HepG2 (cell line): ENCODE measurements at regions of chr16 and their contacts with region 1.

Region 1: DNA sequence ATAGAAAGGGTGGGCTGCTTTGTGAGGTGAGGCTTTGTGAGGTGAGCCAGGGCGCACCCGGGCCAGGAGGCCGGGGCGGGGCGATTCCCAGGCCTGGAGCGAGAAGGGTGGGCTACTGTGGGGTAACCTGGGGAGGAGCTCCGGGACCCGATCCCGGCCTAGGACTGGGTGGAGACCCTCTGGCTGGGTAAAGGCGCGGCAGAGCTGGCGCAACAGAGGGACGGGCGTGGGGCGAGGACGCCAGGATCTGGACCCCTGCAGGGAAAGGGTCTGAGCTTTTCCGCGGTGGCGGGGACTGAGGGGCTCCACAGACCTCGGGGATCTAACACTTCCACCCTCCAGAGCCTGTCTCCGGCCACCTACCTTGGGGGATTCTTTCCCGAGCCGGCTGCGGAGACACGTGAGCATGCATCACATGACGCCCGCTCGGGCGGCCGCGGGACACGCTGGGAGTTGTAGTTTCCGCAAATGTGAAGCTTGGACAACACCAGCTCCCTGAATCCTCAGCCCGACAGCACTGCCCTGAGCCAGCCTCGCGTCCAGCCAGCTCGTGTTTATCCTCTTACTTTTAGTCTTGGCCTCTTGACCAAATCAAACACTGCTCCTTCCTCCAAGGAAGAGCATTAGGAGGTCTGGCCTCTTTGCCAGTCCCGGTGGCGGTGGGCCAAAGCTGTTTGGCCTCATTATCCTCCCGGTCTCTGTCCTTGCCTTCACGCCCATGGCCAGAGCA is at the start of gene SLC38A7:
- DNase-seq: peak; percentile 83
- ATAC-seq: peak; percentile 97
- H3K4me3 ChIP-seq: peak within 1 kb of the TSS; percentile 81 to 91 (median 88)
- H3K27ac ChIP-seq: peak within 1 kb of the TSS; percentile 48
- H3K4me1 ChIP-seq: peaks cover 19% of the 10 kb centered on the region
- H3K27me3 ChIP-seq: no peaks in the 10 kb centered on the region; a peak in 1 of 5 replicates
- CTCF ChIP-seq: peak; percentile 13; the same call in 1 of the 2 replicates
- EP300 ChIP-seq: no peak
- POLR2A ChIP-seq: peak; percentile 66 to 81
- RAD21 ChIP-seq: no peak; the same call in 1 of the 2 replicates
- total RNA-seq, gene SLC38A7: 6.2 and 14.1 TPM in 2 replicates

Region 2: DNA sequence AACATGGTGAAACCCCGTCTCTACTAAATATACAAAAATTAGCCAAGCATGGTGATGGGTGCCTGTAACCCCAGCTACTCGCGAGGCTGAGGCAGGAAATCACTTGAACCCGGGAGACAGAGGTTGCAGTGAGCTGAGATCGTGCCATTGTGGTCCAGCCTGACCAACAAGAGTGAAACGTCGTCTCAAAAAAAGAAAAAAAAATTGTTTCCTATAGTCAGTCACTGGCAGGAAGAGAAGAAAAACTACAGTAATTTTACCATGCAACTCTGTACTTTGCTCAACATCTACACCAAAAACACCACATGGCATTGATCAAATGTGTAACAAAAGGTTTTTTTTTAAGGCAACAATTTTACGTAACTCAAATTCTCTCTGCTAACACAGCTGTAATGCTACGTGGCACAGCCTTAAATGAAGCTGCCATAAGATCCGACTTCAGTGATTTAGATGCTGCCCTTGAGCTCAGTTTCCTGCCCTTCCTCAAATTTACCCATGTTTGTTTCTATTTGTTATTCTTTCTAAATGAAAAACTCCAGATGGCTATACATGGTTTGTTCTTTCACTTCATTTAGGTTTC is 95.1 kb before region 1 on chr16:
- CTCF ChIA-PET with region 1: no interaction called
- POLR2A ChIA-PET with region 1: no interaction called
- in situ Hi-C with region 1: no loop called
- intact Hi-C with region 1: no loop called
- DNase-seq: no peak
- ATAC-seq: no peak
- H3K4me3 ChIP-seq: no peak overlapping the region
- H3K27ac ChIP-seq: no peak overlapping the region
- H3K4me1 ChIP-seq: peaks cover 20% of the 10 kb centered on the region
- H3K27me3 ChIP-seq: no peaks in the 10 kb centered on the region
- CTCF ChIP-seq: no peak
- EP300 ChIP-seq: no peak
- POLR2A ChIP-seq: no peak
- RAD21 ChIP-seq: no peak

Region 3: GRCh38 chr16:58661199-58661830 is 23.2 kb before region 1 on chr16:
- CTCF ChIA-PET with region 1: no interaction called
- POLR2A ChIA-PET with region 1: interaction called, 11 read pairs
- in situ Hi-C with region 1: no loop called
- intact Hi-C with region 1: no loop called
- DNase-seq: peak; percentile 85
- ATAC-seq: peak; percentile 89
- H3K4me3 ChIP-seq: no peak overlapping the region
- H3K27ac ChIP-seq: no peak overlapping the region
- H3K4me1 ChIP-seq: peaks cover 23% of the 10 kb centered on the region
- H3K27me3 ChIP-seq: no peaks in the 10 kb centered on the region
- CTCF ChIP-seq: peak; percentile 93
- EP300 ChIP-seq: no peak
- POLR2A ChIP-seq: no peak
- RAD21 ChIP-seq: peak; percentile 91

Region 4: GRCh38 chr16:58699151-58699550 is 14.6 kb after region 1 on chr16:
- CTCF ChIA-PET with region 1: no interaction called
- POLR2A ChIA-PET with region 1: interaction called, 10 read pairs
- in situ Hi-C with region 1: no loop called
- intact Hi-C with region 1: no loop called
- DNase-seq: no peak
- ATAC-seq: no peak
- H3K4me3 ChIP-seq: no peak overlapping the region
- H3K27ac ChIP-seq: no peak overlapping the region
- H3K4me1 ChIP-seq: peaks cover 4% of the 10 kb centered on the region
- H3K27me3 ChIP-seq: no peaks in the 10 kb centered on the region
- CTCF ChIP-seq: no peak
- EP300 ChIP-seq: no peak
- POLR2A ChIP-seq: no peak
- RAD21 ChIP-seq: no peak